K562 (cell line): ENCODE measurements at regions of chr18 and their contacts with region 1.

Region 1: GRCh38 chr18:7735194-7735593 is 168.1 kb downstream of the PTPRM start:
- DNase-seq: no peak
- ATAC-seq: no peak
- H3K4me3 ChIP-seq: no peak overlapping the region
- H3K27ac ChIP-seq: no peak overlapping the region
- H3K4me1 ChIP-seq: no peaks in the 10 kb centered on the region
- H3K27me3 ChIP-seq: no peaks in the 10 kb centered on the region
- CTCF ChIP-seq: no peak
- EP300 ChIP-seq: no peak
- POLR2A ChIP-seq: no peak
- RAD21 ChIP-seq: no peak

Region 2: DNA sequence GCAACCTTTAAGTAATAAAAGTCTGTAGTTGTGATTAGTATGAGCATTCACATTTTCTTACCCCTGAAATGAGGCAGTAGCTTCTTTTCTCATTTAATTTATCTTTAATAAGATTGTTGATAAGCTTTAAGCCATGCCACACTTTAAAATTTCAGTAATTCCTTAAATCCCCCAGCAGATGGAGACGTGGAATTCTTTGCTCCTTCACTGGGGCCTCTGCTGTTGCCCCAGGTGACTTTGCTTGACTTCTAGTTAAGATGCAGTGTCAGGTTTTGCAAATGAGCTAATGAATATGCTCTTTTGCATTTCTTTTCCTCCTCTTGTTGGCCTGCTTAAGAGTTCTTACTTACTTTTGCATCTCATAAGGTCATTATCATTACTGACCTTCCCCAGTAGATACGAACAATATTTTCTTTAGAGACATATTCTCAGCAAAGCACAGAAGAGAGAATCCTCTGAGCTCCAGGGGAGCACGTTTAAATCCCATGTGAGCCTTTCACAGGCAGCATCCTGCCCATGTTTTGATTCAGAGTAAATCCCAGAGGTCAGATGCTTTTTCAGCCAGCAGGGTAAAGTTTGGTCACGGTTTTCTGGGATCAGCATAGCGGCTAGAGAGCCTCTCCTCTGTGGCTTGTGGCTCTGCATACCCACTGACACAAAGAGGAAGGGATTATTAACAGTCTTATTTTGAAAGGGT is 54.8 kb after region 1 on chr18:
- CTCF ChIA-PET with region 1: no interaction called
- POLR2A ChIA-PET with region 1: no interaction called
- in situ Hi-C with region 1: no loop called
- intact Hi-C with region 1: loop called (anchors 10 kb)
- DNase-seq: peak in 1 of 4 experiments; percentile 23
- ATAC-seq: no peak
- H3K4me3 ChIP-seq: no peak overlapping the region
- H3K27ac ChIP-seq: no peak overlapping the region
- H3K4me1 ChIP-seq: no peaks in the 10 kb centered on the region
- H3K27me3 ChIP-seq: no peaks in the 10 kb centered on the region
- CTCF ChIP-seq: peak in 2 of 3 experiments; percentile 19 to 33; a peak in 3 of 6 replicates
- EP300 ChIP-seq: no peak
- POLR2A ChIP-seq: no peak
- RAD21 ChIP-seq: peak in 1 of 2 experiments; percentile 19; a peak in 1 of 4 replicates